ENCODE measurements at regions of chr9 and their contacts with region 1.

Region 1: DNA sequence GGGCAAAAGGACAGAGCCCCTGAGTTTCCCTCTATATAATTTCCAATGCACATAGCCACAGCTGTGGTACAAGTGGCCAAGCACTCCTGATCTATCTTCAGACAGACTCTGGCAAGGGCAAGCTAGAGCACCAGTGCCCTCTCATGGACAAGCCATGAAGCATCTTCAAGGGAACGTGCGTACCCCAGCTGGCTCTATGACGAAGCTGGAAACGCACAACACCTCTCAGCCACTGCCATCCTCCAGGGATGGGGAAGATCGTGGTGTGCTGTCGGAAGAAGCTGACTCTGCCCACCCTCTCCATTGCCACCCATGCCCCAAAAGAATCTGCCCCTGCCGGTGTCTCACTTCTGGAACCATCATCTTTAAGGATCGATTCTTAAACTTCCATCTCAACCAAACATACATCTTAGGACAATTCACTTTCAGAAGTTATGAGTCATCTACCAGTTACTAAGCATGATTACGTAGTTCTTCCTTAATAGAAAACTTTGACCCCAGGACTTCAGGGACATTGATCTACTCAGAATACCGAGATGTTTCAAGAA is 482.9 kb downstream of the AGTPBP1 start:
- DNase-seq: peak in 5 of 6 donors; percentile 49 to 77 (median 56)
- ATAC-seq: peak; percentile 70 to 97 (median 90)
- H3K4me3 ChIP-seq: no peak overlapping the region
- H3K27ac ChIP-seq: no peak overlapping the region
- H3K4me1 ChIP-seq: no peaks in the 10 kb centered on the region
- H3K27me3 ChIP-seq: no peaks in the 10 kb centered on the region
- CTCF ChIP-seq: peak; percentile 21 to 60 (median 48)

Region 2: DNA sequence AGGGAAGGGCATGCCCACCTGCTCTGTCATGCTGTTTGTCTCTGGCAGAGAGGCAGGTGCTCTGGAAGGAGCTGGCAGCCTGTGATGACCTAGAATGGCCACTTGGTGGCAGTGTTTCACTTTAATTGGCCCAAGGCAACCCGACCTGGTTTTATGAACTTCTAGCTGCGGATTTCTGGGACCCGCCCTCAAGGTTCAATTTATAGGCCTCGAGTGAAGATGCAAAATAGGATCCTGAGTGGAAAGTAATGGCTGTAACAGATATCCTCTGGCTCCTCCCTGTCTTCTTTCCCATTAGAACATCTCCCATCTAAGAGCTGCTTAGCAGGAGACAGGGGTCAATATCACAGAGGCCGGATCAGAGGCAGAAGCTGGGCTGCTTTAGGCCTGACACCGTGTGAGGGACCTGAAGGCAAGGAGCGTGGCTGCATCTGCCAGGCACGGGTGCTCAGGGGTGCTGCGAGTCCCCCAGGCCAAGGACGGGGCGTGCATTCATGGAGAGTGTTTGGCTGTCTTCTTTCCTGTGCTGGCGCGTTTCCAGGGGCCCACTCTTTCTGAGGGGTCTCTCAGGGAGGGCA is 861.7 kb before region 1 on chr9:
- intact Hi-C with region 1: loop called in 1 of 3 experiments (anchors 10 kb)
- DNase-seq: peak; percentile 43 to 81 (median 74)
- ATAC-seq: peak; percentile 81 to 97 (median 94)
- H3K4me3 ChIP-seq: no peak overlapping the region
- H3K27ac ChIP-seq: no peak overlapping the region
- H3K4me1 ChIP-seq: no peaks in the 10 kb centered on the region
- H3K27me3 ChIP-seq: no peaks in the 10 kb centered on the region
- CTCF ChIP-seq: peak; percentile 94 to 96 (median 94)

Region 3: GRCh38 chr9:85108229-85108628 is 150.7 kb before region 1 on chr9:
- intact Hi-C with region 1: no loop called
- DNase-seq: no peak
- ATAC-seq: no peak
- H3K4me3 ChIP-seq: no peak overlapping the region
- H3K27ac ChIP-seq: no peak overlapping the region
- H3K4me1 ChIP-seq: no peaks in the 10 kb centered on the region
- H3K27me3 ChIP-seq: no peaks in the 10 kb centered on the region
- CTCF ChIP-seq: no peak

Measured in pancreas (tissue), 10 donors.